AG04450 (cell line): ENCODE measurements at regions of chr16 and their contacts with region 1.

Region 1: GRCh38 chr16:17578921-17579874 is 108.4 kb upstream of the XYLT1 start:
- DNase-seq: peak; percentile 80
- H3K4me3 ChIP-seq: no peak overlapping the region
- H3K27ac ChIP-seq: no peak overlapping the region
- H3K27me3 ChIP-seq: no peaks in the 10 kb centered on the region
- CTCF ChIP-seq: peak; percentile 97

Region 2: GRCh38 chr16:17467923-17468540 is 111.2 kb before region 1 on chr16:
- CTCF ChIA-PET with region 1: interaction called, 46 read pairs
- POLR2A ChIA-PET with region 1: interaction called, 4 read pairs
- DNase-seq: peak; percentile 32
- H3K4me3 ChIP-seq: peak overlapping the region; percentile 74
- H3K27ac ChIP-seq: no peak overlapping the region
- H3K27me3 ChIP-seq: no peaks in the 10 kb centered on the region
- CTCF ChIP-seq: peak; percentile 90

Region 3: GRCh38 chr16:17488506-17488905 is 90.7 kb before region 1 on chr16:
- CTCF ChIA-PET with region 1: interaction called, 11 read pairs
- POLR2A ChIA-PET with region 1: no interaction called
- DNase-seq: no peak
- H3K4me3 ChIP-seq: no peak overlapping the region
- H3K27ac ChIP-seq: no peak overlapping the region
- H3K27me3 ChIP-seq: no peaks in the 10 kb centered on the region
- CTCF ChIP-seq: no peak

Region 4: DNA sequence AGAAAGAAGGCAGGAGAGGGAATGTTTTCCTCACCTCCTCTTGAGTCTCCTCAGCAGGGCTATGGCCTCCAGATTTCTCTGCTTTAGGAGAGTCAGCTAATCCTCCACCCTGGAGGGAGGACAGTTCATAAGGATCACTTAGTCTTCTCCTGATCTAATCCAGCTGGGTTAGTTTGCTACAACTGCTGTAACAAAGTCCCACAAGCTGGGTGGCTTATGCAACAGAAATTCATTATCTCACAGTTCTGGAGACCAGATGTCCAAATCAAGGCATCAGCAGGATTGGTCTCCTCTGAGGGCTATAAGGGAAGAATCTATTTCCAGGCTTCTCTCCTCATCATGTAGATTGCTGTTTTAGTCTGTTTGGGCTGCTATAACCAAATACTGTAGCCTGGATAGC is 67.9 kb before region 1 on chr16:
- CTCF ChIA-PET with region 1: interaction called, 11 read pairs
- POLR2A ChIA-PET with region 1: interaction called, 5 read pairs
- DNase-seq: peak; percentile 80
- H3K4me3 ChIP-seq: no peak overlapping the region
- H3K27ac ChIP-seq: peak overlapping the region; percentile 52
- H3K27me3 ChIP-seq: no peaks in the 10 kb centered on the region
- CTCF ChIP-seq: no peak

Region 5: DNA sequence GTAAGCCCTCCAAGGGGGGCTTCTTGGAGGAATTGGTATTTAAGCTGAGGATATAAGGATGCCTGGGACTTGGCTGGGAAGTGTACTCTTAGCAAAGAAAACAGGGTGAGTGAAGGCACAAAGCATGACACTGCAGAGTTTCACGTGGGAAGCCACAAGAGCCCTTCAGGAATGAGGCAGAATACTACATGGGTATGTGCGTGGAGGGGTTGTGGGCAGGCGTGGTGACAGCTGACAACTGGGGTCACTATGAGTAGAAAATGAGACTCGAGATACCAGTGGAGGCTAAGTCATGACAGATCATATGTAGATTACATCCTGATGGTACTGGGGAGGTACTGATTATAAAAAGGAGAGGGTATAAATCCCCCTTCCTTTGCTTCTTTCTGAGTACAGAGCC is 30.4 kb before region 1 on chr16:
- CTCF ChIA-PET with region 1: interaction called, 14 read pairs
- POLR2A ChIA-PET with region 1: no interaction called
- DNase-seq: no peak
- H3K4me3 ChIP-seq: no peak overlapping the region
- H3K27ac ChIP-seq: no peak overlapping the region
- H3K27me3 ChIP-seq: no peaks in the 10 kb centered on the region
- CTCF ChIP-seq: no peak

Region 6: DNA sequence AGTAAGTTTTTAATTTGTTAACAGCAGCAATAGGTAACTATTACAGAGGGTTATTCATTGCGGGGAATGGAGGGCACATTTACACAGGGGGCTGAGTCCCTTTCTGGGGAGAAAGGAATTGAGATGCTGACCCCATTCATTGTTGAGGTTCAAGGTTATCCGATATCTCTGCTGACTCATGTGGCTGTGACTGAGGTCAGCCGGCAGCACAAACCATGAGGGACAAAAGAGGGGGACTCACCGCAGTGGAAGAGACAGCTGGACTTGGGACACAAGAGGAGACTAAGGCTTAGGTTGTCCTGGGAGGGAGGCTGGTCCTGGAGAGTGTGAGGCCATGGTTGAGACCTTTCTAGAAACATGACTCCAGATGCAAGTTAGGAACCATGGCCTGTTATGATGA is 10.7 kb after region 1 on chr16:
- CTCF ChIA-PET with region 1: interaction called, 23 read pairs
- POLR2A ChIA-PET with region 1: no interaction called
- DNase-seq: no peak
- H3K4me3 ChIP-seq: no peak overlapping the region
- H3K27ac ChIP-seq: no peak overlapping the region
- H3K27me3 ChIP-seq: peaks cover 8% of the 10 kb centered on the region
- CTCF ChIP-seq: no peak

Region 7: DNA sequence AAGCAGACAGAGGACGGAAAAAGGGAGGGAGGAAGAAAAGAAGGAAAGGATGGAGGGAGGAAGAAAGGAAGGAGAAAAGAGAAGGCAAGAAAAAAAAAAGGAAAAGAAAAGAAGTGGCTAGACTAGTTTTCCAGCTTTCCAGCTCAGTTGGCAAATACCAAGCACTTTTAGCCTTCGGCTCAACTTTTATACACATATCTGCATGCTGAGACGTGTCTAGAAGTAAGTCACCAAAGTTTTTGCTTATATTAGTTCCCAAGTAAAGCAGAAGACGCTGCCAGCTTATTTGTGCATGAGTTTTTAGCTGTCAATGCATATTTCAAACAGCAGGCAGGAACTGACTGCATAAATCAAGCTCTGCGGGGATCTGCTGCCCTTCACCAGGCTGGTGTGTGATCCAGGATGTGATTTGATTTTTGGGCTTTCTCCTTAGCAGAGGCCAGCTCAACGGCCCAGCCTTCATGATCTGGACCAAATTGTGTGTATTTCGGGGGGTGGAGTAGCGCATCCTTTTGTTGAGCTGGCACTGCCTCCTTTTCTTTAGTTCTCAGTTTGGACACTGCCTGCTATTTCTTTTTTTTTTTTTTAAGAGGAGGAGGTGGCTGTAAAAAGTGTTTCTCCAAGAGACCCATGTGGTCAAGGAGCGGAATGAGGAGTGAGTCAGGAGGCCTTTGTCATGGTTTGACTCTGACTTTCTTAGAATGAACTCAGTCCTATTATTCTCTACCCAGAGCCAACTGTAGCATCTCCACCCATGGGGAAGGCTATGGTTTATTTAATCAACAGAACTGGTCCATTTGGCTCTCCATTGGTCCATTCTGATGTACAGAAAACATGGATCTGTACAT is 54.1 kb after region 1 on chr16:
- CTCF ChIA-PET with region 1: no interaction called
- POLR2A ChIA-PET with region 1: no interaction called
- DNase-seq: no peak
- H3K4me3 ChIP-seq: no peak overlapping the region
- H3K27ac ChIP-seq: no peak overlapping the region
- H3K27me3 ChIP-seq: no peaks in the 10 kb centered on the region
- CTCF ChIP-seq: no peak